ENCODE measurements at regions of chr20 and their contacts with region 1.

Region 1: DNA sequence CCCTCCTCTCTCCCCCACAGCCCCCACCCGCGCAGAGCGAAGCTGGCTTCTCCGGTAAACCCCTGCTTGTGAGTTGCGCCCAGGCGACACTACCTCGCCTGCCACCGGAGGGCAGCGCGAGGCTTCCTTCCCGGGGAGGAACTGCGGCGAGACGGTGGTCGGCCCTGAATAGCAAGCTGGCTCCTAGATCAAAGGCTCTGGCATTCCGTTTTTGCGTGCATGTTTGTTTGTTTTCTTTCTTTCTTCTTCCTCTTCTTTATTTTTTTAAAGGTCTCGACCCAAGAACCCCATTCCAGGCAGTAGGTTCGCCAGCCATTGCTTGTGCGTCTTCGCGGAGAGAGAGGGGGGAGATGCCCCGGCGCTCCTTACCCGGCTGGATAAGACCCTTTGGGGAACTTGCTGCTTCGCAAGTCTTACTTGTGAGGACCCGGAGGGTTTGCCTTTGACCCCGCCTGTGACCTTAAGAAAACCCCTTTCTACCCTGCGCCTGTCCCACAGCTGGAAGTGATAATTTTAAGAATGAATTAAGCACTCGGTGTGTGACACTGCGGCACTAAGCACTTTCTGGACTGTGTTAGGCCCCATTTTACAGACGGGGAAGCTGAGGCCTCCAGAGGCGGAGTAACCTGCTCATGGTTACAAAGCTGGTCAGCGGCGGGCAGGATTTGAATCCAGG is 92.7 kb upstream of the SIRPA start:
- DNase-seq: peak; percentile 69 to 70
- ATAC-seq: peak; percentile 72 to 94 (median 88)
- H3K4me3 ChIP-seq: peak overlapping the region; percentile 18 to 76 (median 64)
- H3K27ac ChIP-seq: peak overlapping the region; percentile 57 to 90 (median 86)
- H3K4me1 ChIP-seq: peaks cover 6 to 39% (median 19%) of the 10 kb centered on the region in 9 donors
- H3K27me3 ChIP-seq: peaks cover 0 to 9% (median 0%) of the 10 kb centered on the region in 7 donors
- CTCF ChIP-seq: peak; percentile 41 to 85 (median 67)

Region 2: DNA sequence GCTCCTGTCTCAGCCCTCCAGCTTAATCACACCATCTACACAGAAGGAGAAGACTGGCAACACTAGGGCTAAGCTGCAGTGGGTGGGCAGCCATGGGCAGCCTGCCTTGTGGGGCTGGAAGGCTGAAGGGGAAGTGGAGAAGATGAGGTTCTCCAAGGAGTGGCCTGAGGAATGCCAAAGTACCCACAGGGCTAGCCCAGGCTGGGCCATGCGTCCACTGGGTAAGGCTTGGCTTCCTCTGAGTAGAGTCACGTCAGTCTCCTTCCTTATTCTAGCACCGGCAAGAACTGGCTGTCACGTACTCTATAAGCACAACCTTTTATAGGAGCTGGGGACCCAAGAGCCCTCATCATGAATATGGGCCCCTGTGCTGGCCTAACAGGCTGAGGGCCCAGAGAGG is 17.9 kb before region 1 on chr20:
- intact Hi-C with region 1: no loop called
- DNase-seq: no peak
- ATAC-seq: peak in 2 of 8 donors; percentile 21 to 42
- H3K4me3 ChIP-seq: no peak overlapping the region
- H3K27ac ChIP-seq: no peak overlapping the region
- H3K4me1 ChIP-seq: peaks cover 0 to 15% (median 0%) of the 10 kb centered on the region in 9 donors
- H3K27me3 ChIP-seq: peaks cover 0 to 52% (median 40%) of the 10 kb centered on the region in 7 donors
- CTCF ChIP-seq: no peak

Region 3: DNA sequence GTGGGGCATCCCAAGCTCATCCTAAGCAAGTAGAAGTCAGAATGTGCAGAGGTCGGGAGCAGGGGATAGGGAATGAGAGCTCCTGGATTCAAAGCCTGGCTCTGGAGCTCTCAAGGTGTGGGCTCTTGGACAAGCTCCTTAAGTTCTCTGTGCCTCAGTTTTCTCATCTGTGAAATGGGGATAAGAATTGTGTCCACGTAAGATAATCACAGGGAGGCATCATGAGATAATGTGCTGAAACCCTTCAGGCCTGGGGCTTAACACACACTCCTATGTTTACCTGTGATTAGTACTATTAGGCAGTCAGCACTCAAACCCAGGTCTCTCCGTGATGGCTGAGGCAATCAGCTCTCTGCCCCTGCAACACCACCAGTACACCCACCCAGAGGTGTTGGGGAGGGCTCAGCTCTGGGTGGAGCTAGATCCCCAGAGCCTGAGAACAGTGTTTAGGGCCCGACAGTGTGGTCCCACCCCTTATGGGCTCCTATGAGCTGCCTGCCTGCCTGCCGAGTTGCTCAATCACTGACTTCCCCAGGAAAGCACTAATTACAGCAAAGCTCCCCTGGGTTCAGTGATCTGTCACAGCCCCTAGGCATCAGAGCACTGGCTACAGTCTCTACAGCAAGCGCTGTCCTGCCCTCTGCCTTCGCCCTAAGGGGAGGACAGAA is 86.4 kb after region 1 on chr20:
- intact Hi-C with region 1: loop called in 8 of 10 experiments (anchors 1 to 10 kb)
- DNase-seq: no peak
- ATAC-seq: peak in 5 of 8 donors; percentile 4 to 50 (median 16)
- H3K4me3 ChIP-seq: no peak overlapping the region
- H3K27ac ChIP-seq: peak overlapping the region in 1 of 10 donors; percentile 10
- H3K4me1 ChIP-seq: peaks cover 0 to 50% (median 14%) of the 10 kb centered on the region in 9 donors
- H3K27me3 ChIP-seq: peaks cover 0 to 10% (median 0%) of the 10 kb centered on the region in 7 donors
- CTCF ChIP-seq: no peak

Region 4: DNA sequence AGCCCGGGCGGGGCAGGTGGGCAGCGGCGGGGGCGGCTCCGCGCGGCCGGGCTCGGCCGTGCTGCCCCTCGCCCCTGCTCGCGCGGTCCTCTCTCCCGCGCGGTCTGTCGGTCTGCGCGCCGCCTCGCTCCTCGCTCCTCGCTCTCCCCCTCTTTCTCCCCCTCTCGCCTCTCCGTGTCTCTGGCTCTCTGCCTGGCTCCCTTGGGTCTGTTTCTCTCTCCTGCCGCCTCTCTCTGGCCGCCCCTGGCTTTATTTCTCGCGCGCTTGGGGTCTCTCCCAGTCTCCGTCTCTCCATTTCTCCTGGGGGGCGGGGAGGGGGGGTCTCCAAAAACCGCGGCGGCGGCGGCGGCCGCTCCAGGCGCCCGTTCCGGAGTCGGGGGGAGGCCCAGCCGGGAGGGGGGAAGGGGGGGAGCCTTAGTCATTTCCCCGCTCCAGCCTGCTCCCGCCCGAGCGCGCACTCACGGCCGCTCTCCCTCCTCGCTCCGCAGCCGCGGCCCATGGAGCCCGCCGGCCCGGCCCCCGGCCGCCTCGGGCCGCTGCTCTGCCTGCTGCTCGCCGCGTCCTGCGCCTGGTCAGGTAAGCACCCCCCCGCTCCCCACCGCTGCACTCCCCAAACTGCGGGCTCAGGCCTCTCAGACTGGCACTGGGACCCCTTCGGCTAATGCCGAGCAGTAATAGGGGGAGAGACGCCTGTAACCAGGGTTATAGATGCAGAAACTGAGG is 92.6 kb after region 1 on chr20 and contains the start of gene SIRPA:
- intact Hi-C with region 1: loop called in 7 of 10 experiments (anchors 1 to 5 kb)
- DNase-seq: peak; percentile 67 to 69
- ATAC-seq: peak; percentile 48 to 70 (median 64)
- H3K4me3 ChIP-seq: peak within 1 kb of the TSS; percentile 61 to 82 (median 74)
- H3K27ac ChIP-seq: peak within 1 kb of the TSS; percentile 72 to 97 (median 94)
- H3K4me1 ChIP-seq: peaks cover 3 to 63% (median 60%) of the 10 kb centered on the region in 9 donors
- H3K27me3 ChIP-seq: peaks cover 0 to 16% (median 0%) of the 10 kb centered on the region in 7 donors
- CTCF ChIP-seq: no peak
- total RNA-seq, gene SIRPA: 16.7 to 45.8 (median 24.8) TPM

Region 5: GRCh38 chr20:1933465-1933870 is 130.9 kb after region 1 on chr20:
- intact Hi-C with region 1: loop called in 1 of 10 experiments (anchors 1 kb)
- DNase-seq: peak; percentile 70 to 73
- ATAC-seq: peak; percentile 42 to 83 (median 71)
- H3K4me3 ChIP-seq: no peak overlapping the region
- H3K27ac ChIP-seq: peak overlapping the region in 9 of 10 donors; percentile 36 to 79 (median 70)
- H3K4me1 ChIP-seq: peaks cover 0 to 51% (median 35%) of the 10 kb centered on the region in 9 donors
- H3K27me3 ChIP-seq: no peaks in the 10 kb centered on the region
- CTCF ChIP-seq: no peak

Region 6: DNA sequence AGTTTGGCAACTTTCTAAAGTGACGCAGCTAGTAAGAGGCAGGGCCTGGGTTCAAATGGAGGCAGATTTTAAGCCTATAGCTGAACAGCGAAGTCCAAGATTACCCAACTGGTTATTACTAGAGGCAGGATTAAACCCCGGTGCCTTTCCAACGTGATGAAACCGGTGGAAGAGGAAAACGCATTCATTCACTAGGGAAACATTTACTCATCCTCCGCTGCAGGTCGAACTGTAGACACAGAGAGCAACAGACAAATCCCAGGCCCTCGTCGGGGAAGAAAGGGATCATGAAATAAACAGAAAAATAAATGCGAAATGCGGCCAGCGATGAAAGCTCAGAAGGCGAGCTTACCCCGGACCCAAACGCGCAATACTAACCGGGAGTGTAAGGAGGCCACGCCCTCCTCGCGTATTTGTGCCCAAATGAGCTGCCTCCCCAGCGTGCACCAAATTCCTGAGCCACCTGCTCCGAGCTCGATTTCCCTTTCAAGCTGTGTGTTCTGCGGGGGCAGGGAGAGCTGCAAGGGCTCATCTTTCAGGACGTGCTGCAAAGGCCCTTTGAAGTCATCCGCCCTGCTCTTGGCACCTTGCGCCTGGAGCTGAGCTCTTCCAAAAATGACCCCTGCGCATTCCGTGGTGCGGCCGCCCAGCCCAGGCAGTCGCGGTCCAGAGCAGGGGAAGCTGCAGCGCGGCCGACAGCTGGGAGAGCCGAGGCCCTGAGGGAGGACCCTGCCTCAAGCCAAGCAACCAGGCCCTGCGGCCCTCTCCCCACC is 144.4 kb after region 1 on chr20:
- intact Hi-C with region 1: loop called in 1 of 10 experiments (anchors 10 kb)
- DNase-seq: peak in 1 of 2 donors; percentile 30
- ATAC-seq: peak in 7 of 8 donors; percentile 7 to 43 (median 26)
- H3K4me3 ChIP-seq: peak overlapping the region in 8 of 10 donors; percentile 16 to 42 (median 34)
- H3K27ac ChIP-seq: peak overlapping the region in 2 of 10 donors; percentile 17 to 88
- H3K4me1 ChIP-seq: peaks cover 0 to 96% (median 15%) of the 10 kb centered on the region in 9 donors
- H3K27me3 ChIP-seq: peaks cover 0 to 37% (median 8%) of the 10 kb centered on the region in 7 donors
- CTCF ChIP-seq: no peak

Measured in heart right ventricle (tissue), 16 donors.